ENCODE measurements at regions of chr3 and their contacts with region 1.

Region 1: DNA sequence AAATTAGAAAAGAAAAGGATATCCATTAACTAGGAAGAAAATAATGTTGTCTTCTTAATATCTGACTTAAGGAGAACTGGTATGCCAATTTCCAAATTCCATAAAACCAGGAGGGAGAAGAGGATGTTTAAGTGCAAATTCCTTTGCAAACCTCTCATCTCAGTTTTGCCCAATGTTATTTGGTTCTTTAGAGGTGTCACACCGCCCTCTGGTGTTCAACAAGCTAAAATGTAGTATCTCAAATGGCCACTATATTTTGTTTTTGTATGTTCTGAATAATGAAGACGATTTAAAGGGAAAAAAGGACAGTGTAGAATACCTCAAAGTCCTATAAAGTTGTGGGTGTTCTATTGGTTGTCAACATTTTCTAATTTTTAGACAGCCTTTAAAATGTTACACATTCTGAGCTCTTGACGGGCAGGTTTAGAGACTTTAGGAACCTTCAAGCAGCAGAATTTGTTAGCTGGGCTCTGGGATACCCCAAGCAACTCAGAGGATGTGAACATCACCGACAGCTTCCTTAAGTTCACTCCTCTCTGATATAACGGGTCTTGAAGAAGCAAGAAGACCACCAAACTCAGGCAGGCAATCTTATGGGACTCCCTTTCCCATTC is 458.3 kb downstream of the MFSD1 start:
- DNase-seq: peak; percentile 45
- ATAC-seq: peak; percentile 74
- H3K4me3 ChIP-seq: no peak overlapping the region
- H3K27ac ChIP-seq: no peak overlapping the region
- H3K4me1 ChIP-seq: no peaks in the 10 kb centered on the region
- H3K27me3 ChIP-seq: 0 out of 2 replicates have a peak, but pooled peaks cover 6% of the 10 kb centered on the region
- CTCF ChIP-seq: peak; percentile 59 to 89 (median 83)
- POLR2A ChIP-seq: no peak
- RAD21 ChIP-seq: peak; percentile 89

Region 2: GRCh38 chr3:158727206-158728060 is 532.7 kb before region 1 on chr3:
- CTCF ChIA-PET with region 1: interaction called, 10 read pairs
- POLR2A ChIA-PET with region 1: no interaction called
- RAD21 ChIA-PET with region 1: no interaction called
- intact Hi-C with region 1: loop called (anchors 5 kb)
- DNase-seq: peak; percentile 42
- ATAC-seq: peak; percentile 73
- H3K4me3 ChIP-seq: no peak overlapping the region
- H3K27ac ChIP-seq: no peak overlapping the region
- H3K4me1 ChIP-seq: peaks cover 13 to 27% of the 10 kb centered on the region in 2 experiments
- H3K27me3 ChIP-seq: no peaks in the 10 kb centered on the region
- CTCF ChIP-seq: peak; percentile 42 to 84 (median 72); a peak in 5 of 6 replicates
- POLR2A ChIP-seq: no peak
- RAD21 ChIP-seq: peak; percentile 60

Region 3: GRCh38 chr3:158845765-158846350 is 414.3 kb before region 1 on chr3:
- CTCF ChIA-PET with region 1: interaction called, 52 read pairs
- POLR2A ChIA-PET with region 1: no interaction called
- RAD21 ChIA-PET with region 1: interaction called in 1 of 2 experiments, 8 read pairs
- intact Hi-C with region 1: loop called (anchors 1 kb)
- DNase-seq: peak; percentile 27
- ATAC-seq: peak; percentile 85
- H3K4me3 ChIP-seq: no peak overlapping the region
- H3K27ac ChIP-seq: no peak overlapping the region
- H3K4me1 ChIP-seq: no peaks in the 10 kb centered on the region
- H3K27me3 ChIP-seq: no peaks in the 10 kb centered on the region
- CTCF ChIP-seq: peak; percentile 58 to 77 (median 68); a peak in 4 of 6 replicates
- POLR2A ChIP-seq: no peak
- RAD21 ChIP-seq: peak; percentile 87

Region 4: GRCh38 chr3:158918008-158918407 is 342.1 kb before region 1 on chr3:
- CTCF ChIA-PET with region 1: interaction called, 19 read pairs
- POLR2A ChIA-PET with region 1: no interaction called
- RAD21 ChIA-PET with region 1: no interaction called
- intact Hi-C with region 1: loop called (anchors 1 kb)
- DNase-seq: peak; percentile 52
- ATAC-seq: peak; percentile 97
- H3K4me3 ChIP-seq: no peak overlapping the region
- H3K27ac ChIP-seq: no peak overlapping the region
- H3K4me1 ChIP-seq: peaks cover 0 to 7% of the 10 kb centered on the region in 2 experiments; a peak in 2 of 4 replicates
- H3K27me3 ChIP-seq: no peaks in the 10 kb centered on the region
- CTCF ChIP-seq: peak; percentile 66 to 84 (median 79); a peak in 5 of 6 replicates
- POLR2A ChIP-seq: no peak
- RAD21 ChIP-seq: peak; percentile 76

Region 5: GRCh38 chr3:159185443-159186050 is 74.6 kb before region 1 on chr3:
- CTCF ChIA-PET with region 1: no interaction called
- POLR2A ChIA-PET with region 1: no interaction called
- RAD21 ChIA-PET with region 1: no interaction called
- intact Hi-C with region 1: no loop called
- DNase-seq: no peak
- ATAC-seq: no peak
- H3K4me3 ChIP-seq: no peak overlapping the region
- H3K27ac ChIP-seq: no peak overlapping the region
- H3K4me1 ChIP-seq: peaks cover 0 to 9% of the 10 kb centered on the region in 2 experiments; a peak in 2 of 4 replicates
- H3K27me3 ChIP-seq: no peaks in the 10 kb centered on the region
- CTCF ChIP-seq: no peak
- POLR2A ChIP-seq: no peak
- RAD21 ChIP-seq: no peak